ENCODE measurements at regions of chr20 and their contacts with region 1.

Region 1: DNA sequence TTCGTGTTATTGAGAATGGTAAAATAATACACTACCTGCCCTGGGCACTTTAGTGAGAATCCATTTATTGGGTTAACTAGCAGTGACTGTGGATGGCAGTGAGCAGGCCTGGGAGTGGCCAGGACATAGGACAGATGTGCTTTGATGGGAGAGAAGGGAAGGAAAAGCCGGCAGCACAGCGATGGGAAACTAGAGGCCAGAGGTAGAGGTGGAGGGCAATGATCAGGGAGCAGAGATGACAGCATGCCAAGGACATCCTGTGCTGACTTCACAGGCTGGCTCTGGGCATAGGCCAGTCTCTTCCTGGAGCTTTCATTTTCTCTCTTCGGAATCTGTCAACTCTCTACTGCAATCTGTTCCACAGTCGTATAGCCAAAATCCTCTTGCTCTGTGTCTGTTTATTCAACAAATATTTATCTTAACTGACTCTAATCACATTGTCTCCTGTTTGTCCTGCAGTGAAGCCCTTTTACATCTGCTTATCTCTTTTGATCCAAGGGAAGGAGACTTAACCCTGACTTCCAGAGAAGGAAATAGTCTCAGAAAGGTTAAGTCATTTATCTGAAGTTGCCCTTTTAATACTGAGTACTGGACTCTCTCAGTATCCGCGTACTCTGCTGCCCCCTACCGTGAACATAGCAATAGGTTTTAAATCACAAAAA is 18.4 kb upstream of the MMP24 start:
- DNase-seq: peak; percentile 76
- ATAC-seq: peak; percentile 92

Region 2: GRCh38 chr20:34834459-34834893 is 373.6 kb before region 1 on chr20:
- intact Hi-C with region 1: loop called (anchors 5 kb)
- DNase-seq: no peak
- ATAC-seq: no peak

Region 3: GRCh38 chr20:34876162-34877001 is 331.7 kb before region 1 on chr20 and contains the start of gene ACSS2:
- intact Hi-C with region 1: loop called (anchors 10 kb)
- DNase-seq: peak; percentile 100
- ATAC-seq: peak; percentile 91
- total RNA-seq, gene ACSS2: 149 TPM

Region 4: DNA sequence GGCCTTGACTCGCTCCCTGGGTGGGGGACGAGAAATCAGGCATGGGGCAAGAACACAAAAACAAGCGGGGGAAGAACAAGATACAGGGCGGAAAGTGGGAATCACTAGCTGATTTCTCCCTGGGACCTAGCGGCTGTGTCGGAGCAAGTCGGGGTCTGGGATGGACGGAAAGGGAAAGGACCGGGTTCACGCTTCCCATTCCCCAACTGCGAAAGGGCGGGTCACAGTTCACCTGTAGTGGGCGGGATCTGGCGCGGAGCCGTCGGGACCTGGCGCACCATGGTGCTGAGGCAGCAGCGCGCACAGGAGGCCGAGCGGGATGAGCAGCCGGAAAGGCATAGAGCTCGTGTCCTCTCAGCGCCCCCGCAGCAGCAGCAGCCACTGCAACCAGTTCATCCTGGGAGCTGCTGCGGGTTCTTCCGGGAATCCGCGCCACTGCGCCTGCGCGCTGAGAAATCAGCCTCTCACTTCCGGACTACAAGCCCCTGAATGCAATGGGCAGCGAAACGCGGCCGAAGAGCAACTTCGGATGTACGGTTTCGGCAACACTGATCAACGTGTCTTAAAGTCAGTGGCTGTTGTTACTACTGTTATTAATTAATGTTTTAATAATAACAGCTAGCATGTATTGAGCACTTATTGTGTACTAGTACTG is 61.0 kb before region 1 on chr20 and contains the start of gene EDEM2:
- intact Hi-C with region 1: loop called (anchors 1 kb)
- DNase-seq: peak; percentile 97
- ATAC-seq: peak; percentile 92
- total RNA-seq, gene EDEM2: 12.7 TPM

Measured in Right ventricle myocardium inferior (tissue), 1 donor.